Activated CD4-positive, alpha-beta T cell treated with anti-CD3 and anti-CD28 coated beads, Interleukin-2, amount 10 ng/mL, durations not matched to agents 24 days and 14 days (primary cell): ENCODE measurements at regions of chr1 and their contacts with region 1.

Region 1: DNA sequence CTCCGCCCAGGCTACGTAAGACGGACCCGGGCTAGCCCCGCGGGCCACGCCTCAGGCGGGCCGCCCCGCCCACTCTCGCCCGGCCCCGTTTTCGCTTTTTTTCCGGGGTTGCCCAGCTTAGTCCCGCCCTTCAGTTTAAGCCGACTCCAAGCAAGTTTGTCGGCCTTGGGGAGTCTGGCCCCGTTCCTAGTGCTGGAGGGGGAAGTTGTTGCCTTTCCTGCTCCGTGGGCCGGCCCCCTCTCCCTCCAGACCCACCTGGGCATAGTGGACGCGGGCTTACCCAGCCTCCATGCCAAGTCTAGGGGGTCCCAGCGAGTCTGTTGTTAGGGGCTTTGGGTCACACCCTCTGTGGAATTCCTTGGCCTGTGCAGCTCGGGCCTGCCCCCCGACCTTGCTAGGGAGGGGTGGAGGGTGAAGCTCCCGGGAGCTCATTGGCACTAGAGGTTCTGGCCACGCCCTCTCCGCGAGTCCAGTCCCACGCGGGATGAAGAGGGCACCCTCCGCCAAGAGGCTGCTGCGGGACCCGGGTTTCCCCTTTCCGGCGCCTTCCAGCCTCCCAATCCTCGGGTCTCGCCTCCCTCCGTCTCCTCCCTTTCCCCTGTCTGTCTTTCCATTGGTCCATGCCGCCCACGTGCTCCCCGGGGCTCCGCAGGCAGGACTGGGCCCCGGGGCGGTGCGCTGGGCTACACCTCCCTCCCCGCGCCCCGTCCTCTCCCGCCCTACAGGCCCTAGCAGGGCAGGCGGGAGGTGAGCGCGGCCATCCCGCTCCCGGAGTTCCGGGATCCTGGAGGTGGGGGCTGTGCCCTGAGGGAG is 3.3 kb downstream of the RUSC1 start:
- DNase-seq: peak; percentile 98
- H3K4me3 Mint-ChIP-seq: peak overlapping the region; percentile 91
- H3K27ac Mint-ChIP-seq: peak overlapping the region; percentile 86
- H3K4me1 Mint-ChIP-seq: peaks cover 36% of the 10 kb centered on the region
- H3K27me3 Mint-ChIP-seq: no peaks in the 10 kb centered on the region

Region 2: DNA sequence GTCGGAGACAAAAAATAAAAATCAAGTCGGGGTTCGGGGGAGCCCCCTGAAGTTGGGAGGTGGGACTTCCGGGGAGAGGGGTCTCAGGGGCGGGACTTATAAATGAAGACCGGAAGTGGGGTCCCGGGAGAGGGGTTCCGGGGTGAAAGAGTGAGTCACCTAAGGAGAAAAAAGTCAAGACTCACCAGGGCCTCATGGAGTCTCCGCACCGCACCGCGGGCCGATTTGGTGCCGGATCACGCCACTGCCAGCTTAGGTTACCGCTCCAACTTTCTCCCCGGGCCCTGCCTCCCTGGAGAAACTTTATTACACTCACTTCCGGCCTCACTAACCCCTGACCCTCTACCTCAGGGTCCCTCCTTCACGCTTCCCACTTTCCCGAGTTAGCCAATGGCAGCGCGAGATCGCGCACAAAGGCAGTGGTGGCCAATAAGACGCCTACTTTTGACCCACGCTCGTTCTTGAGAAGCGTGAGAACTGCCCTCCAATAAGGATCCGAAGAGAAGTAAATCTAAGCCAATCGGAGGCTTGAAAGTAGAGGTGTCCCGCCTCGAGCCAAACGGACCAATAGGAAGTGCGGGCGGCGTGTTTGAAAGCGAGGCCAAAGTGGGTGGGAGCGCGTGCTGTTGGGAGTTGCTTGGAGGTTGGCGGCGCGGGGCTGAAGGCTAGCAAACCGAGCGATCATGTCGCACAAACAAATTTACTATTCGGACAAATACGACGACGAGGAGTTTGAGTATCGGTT is 349.8 kb before region 1 on chr1 and contains the start of gene CKS1B:
- intact Hi-C with region 1: loop called (anchors 5 kb)
- DNase-seq: peak; percentile 98
- H3K4me3 Mint-ChIP-seq: no peak within 1 kb of the TSS
- H3K27ac Mint-ChIP-seq: no peak within 1 kb of the TSS
- H3K4me1 Mint-ChIP-seq: peaks cover 39% of the 10 kb centered on the region
- H3K27me3 Mint-ChIP-seq: no peaks in the 10 kb centered on the region
- total RNA-seq, gene CKS1B: 179 and 181 TPM in 2 replicates

Region 3: GRCh38 chr1:155208541-155209311 is 115.3 kb before region 1 on chr1 and contains the start of gene MTX1:
- intact Hi-C with region 1: loop called (anchors 5 kb)
- DNase-seq: peak; percentile 97
- H3K4me3 Mint-ChIP-seq: peak within 1 kb of the TSS; percentile 95
- H3K27ac Mint-ChIP-seq: peak within 1 kb of the TSS; percentile 93
- H3K4me1 Mint-ChIP-seq: peaks cover 26% of the 10 kb centered on the region
- H3K27me3 Mint-ChIP-seq: no peaks in the 10 kb centered on the region
- total RNA-seq, gene MTX1: 62.4 and 64.7 TPM in 2 replicates

Region 4: GRCh38 chr1:155261852-155262673 is 61.9 kb before region 1 on chr1 and contains the start of gene SCAMP3:
- intact Hi-C with region 1: loop called (anchors 1 kb)
- DNase-seq: peak; percentile 96
- H3K4me3 Mint-ChIP-seq: peak within 1 kb of the TSS; percentile 96
- H3K27ac Mint-ChIP-seq: peak within 1 kb of the TSS; percentile 91
- H3K4me1 Mint-ChIP-seq: peaks cover 30% of the 10 kb centered on the region
- H3K27me3 Mint-ChIP-seq: no peaks in the 10 kb centered on the region
- total RNA-seq, gene SCAMP3: 152 and 158 TPM in 2 replicates

Region 5: GRCh38 chr1:155308493-155309422 is 15.2 kb before region 1 on chr1 and contains the start of gene FDPS:
- intact Hi-C with region 1: loop called (anchors 1 kb)
- DNase-seq: peak; percentile 99
- H3K4me3 Mint-ChIP-seq: peak within 1 kb of the TSS; percentile 99
- H3K27ac Mint-ChIP-seq: peak within 1 kb of the TSS; percentile 92
- H3K4me1 Mint-ChIP-seq: peaks cover 39% of the 10 kb centered on the region
- H3K27me3 Mint-ChIP-seq: no peaks in the 10 kb centered on the region
- total RNA-seq, gene FDPS: 321 and 324 TPM in 2 replicates

Region 6: GRCh38 chr1:155379631-155380090 is 55.7 kb after region 1 on chr1:
- intact Hi-C with region 1: no loop called
- DNase-seq: no peak
- H3K4me3 Mint-ChIP-seq: no peak overlapping the region
- H3K27ac Mint-ChIP-seq: no peak overlapping the region
- H3K4me1 Mint-ChIP-seq: peaks cover 7% of the 10 kb centered on the region
- H3K27me3 Mint-ChIP-seq: no peaks in the 10 kb centered on the region

Region 7: GRCh38 chr1:155609515-155610256 is 285.7 kb after region 1 on chr1 and contains the start of gene MSTO1:
- intact Hi-C with region 1: loop called (anchors 1 kb)
- DNase-seq: peak; percentile 98
- H3K4me3 Mint-ChIP-seq: peak within 1 kb of the TSS; percentile 97
- H3K27ac Mint-ChIP-seq: peak within 1 kb of the TSS; percentile 96
- H3K4me1 Mint-ChIP-seq: peaks cover 3% of the 10 kb centered on the region
- H3K27me3 Mint-ChIP-seq: peaks cover 4% of the 10 kb centered on the region
- total RNA-seq, gene MSTO1: 103 and 104 TPM in 2 replicates